ENCODE measurements at regions of chr5 and their contacts with region 1.

Region 1: DNA sequence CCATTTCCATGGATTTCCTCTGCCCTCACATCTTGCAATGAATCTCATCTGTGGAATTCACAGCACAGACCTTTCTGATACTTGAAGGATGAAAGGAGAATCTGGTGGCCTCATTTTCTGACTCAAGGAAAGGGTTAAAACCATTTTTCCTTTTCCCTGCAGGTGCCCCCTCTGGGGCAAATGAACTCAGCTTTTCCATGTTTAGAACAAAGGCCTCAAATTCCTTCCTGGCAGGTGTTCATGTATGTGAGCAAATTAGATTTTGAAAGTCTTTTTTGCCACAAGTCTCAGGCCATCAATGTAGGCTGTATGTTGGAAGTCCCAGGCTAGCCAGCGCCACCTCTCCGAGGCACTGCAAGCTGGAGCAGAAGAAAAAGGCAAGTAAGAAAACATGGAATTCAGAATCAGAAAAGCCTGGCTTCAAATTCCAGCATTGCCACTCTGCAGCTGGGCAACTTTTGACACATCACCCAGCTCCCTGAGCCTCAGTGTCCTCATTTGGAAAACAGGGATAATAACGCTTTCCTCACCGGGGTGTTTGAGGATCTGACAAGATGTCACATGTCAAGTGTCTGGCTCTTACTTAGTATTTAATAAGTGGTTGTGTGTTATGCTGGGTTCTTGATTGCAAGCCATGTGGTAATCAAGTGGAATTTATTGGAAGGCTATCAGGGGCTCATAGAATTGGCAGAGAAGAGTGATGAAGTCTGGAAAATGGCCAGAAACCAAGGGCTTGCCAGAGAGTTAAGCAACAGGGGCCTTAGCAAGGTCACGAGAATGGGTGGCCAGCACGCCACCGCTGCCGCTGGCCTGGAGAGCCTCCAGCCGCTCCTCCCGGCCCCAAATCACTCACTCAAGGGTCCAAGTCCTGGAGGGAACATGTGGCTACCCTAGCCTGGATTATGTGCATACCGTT is 48.4 kb upstream of the SMIM23 start:
- DNase-seq: no peak
- ATAC-seq: no peak
- H3K4me3 ChIP-seq: no peak overlapping the region
- H3K27ac ChIP-seq: no peak overlapping the region
- H3K4me1 ChIP-seq: no peaks in the 10 kb centered on the region
- H3K27me3 ChIP-seq: no peaks in the 10 kb centered on the region
- CTCF ChIP-seq: no peak
- POLR2A ChIP-seq: no peak
- RAD21 ChIP-seq: no peak

Region 2: GRCh38 chr5:171445644-171446516 is 291.4 kb before region 1 on chr5:
- CTCF ChIA-PET with region 1: no interaction called
- POLR2A ChIA-PET with region 1: no interaction called
- RAD21 ChIA-PET with region 1: no interaction called
- intact Hi-C with region 1: no loop called
- DNase-seq: no peak
- ATAC-seq: no peak
- H3K4me3 ChIP-seq: no peak overlapping the region
- H3K27ac ChIP-seq: no peak overlapping the region
- H3K4me1 ChIP-seq: peaks cover 8 to 22% of the 10 kb centered on the region in 2 experiments; a peak in 3 of 4 replicates
- H3K27me3 ChIP-seq: no peaks in the 10 kb centered on the region
- CTCF ChIP-seq: no peak
- POLR2A ChIP-seq: no peak
- RAD21 ChIP-seq: no peak

Region 3: DNA sequence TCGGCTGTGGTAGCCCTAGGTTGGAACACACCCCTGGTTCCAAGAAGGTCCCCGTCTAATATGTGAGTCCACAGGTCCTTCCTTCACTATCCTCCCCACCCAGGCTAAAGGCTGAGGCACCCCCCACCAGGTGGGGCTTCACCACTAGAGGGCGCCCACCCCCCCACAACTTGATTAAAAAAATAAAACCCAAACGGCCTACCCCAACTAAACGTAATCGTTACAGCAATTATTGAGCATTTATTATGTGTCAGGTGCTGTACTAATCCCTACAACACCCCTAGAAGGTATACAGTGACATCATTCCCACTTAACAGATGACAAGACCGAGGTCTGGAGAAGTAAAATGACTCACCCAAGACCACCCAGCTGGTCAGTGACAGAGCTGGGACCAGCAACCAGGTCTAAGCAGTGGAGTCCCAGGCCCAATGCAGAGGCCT is 252.8 kb before region 1 on chr5:
- CTCF ChIA-PET with region 1: no interaction called
- POLR2A ChIA-PET with region 1: no interaction called
- RAD21 ChIA-PET with region 1: no interaction called
- intact Hi-C with region 1: no loop called
- DNase-seq: peak; percentile 10
- ATAC-seq: peak; percentile 92
- H3K4me3 ChIP-seq: no peak overlapping the region
- H3K27ac ChIP-seq: no peak overlapping the region
- H3K4me1 ChIP-seq: peaks cover 0 to 6% of the 10 kb centered on the region in 2 experiments; a peak in 1 of 4 replicates
- H3K27me3 ChIP-seq: no peaks in the 10 kb centered on the region
- CTCF ChIP-seq: peak; percentile 83 to 99 (median 88)
- POLR2A ChIP-seq: no peak
- RAD21 ChIP-seq: peak; percentile 77

Region 4: DNA sequence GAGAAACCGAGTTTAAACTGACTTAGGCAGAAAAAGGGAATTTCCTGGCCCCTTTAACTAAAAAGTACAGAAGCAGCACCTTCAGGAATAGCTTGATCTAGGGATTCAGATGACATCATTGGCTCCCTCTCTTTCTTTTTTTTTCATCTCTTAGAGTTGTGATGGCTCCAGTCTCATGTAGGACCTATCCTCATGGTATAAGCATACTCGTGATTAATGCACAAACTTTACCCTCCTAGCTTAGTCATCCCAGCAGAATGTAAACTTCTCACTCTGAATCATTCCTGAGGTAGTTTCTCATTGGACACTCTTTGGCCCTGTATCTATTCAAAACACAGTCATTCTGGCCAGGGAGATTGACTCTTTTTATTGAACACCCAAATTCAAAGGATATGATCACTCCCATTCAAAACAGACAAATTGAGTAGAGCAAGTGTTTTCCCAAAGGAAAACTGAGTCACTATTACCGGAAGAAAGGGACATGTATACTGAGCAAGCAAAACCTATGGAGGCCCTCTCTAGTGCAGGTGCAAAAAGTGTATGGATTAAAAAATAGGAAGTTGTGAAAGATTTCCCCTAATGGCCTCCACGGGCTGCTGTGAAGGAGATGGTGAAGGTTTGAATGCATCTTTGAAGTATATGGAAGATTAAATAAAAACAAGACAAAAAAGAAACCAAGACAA is 20.8 kb after region 1 on chr5:
- CTCF ChIA-PET with region 1: no interaction called
- POLR2A ChIA-PET with region 1: no interaction called
- RAD21 ChIA-PET with region 1: no interaction called
- intact Hi-C with region 1: loop called (anchors 1 kb)
- DNase-seq: peak; percentile 67
- ATAC-seq: peak; percentile 95
- H3K4me3 ChIP-seq: no peak overlapping the region
- H3K27ac ChIP-seq: no peak overlapping the region
- H3K4me1 ChIP-seq: peaks cover 0 to 16% of the 10 kb centered on the region in 2 experiments; a peak in 2 of 4 replicates
- H3K27me3 ChIP-seq: no peaks in the 10 kb centered on the region
- CTCF ChIP-seq: no peak
- POLR2A ChIP-seq: no peak
- RAD21 ChIP-seq: no peak; the same call in 1 of the 2 replicates

Measured in HCT116 (cell line).